ENCODE measurements at regions of chr16 and their contacts with region 1.

Region 1: GRCh38 chr16:79882340-79883005 is 281.9 kb upstream of the MAF start:
- DNase-seq: no peak
- H3K4me3 ChIP-seq: no peak overlapping the region
- H3K27ac ChIP-seq: no peak overlapping the region
- H3K4me1 ChIP-seq: no peaks in the 10 kb centered on the region
- H3K27me3 ChIP-seq: no peaks in the 10 kb centered on the region
- CTCF ChIP-seq: no peak
- EP300 ChIP-seq: no peak
- POLR2A ChIP-seq: no peak

Region 2: GRCh38 chr16:79542237-79542774 is 340.2 kb before region 1 on chr16:
- in situ Hi-C with region 1: no loop called
- intact Hi-C with region 1: loop called (anchors 5 kb)
- DNase-seq: peak; percentile 27
- H3K4me3 ChIP-seq: no peak overlapping the region
- H3K27ac ChIP-seq: peak overlapping the region in 1 of 4 donors; percentile 11
- H3K4me1 ChIP-seq: no peaks in the 10 kb centered on the region
- H3K27me3 ChIP-seq: no peaks in the 10 kb centered on the region
- CTCF ChIP-seq: no peak
- EP300 ChIP-seq: no peak
- POLR2A ChIP-seq: no peak

Region 3: DNA sequence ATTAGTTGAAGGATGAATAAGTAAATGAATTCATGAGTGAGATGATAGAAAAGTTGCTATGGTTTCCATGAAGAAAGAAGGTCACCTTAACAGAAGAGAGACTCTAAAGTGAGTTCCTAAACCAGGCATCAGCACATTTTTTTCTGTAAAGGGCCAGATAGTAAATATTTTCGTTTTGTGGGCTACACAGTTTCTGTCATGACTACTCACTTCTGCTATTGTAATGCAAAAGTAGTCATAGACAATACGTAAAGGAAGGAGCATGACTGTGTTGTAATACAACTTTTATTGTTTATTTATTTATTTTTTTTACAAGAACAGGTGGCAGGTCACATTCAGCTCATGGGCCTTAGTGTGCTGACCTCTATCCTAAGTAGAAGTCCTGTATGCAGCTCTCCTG is 232.2 kb after region 1 on chr16:
- in situ Hi-C with region 1: no loop called
- intact Hi-C with region 1: no loop called
- DNase-seq: no peak
- H3K4me3 ChIP-seq: no peak overlapping the region
- H3K27ac ChIP-seq: no peak overlapping the region
- H3K4me1 ChIP-seq: no peaks in the 10 kb centered on the region
- H3K27me3 ChIP-seq: no peaks in the 10 kb centered on the region
- CTCF ChIP-seq: no peak
- EP300 ChIP-seq: no peak
- POLR2A ChIP-seq: no peak